ENCODE measurements at regions of chr7 and their contacts with region 1.

Region 1: DNA sequence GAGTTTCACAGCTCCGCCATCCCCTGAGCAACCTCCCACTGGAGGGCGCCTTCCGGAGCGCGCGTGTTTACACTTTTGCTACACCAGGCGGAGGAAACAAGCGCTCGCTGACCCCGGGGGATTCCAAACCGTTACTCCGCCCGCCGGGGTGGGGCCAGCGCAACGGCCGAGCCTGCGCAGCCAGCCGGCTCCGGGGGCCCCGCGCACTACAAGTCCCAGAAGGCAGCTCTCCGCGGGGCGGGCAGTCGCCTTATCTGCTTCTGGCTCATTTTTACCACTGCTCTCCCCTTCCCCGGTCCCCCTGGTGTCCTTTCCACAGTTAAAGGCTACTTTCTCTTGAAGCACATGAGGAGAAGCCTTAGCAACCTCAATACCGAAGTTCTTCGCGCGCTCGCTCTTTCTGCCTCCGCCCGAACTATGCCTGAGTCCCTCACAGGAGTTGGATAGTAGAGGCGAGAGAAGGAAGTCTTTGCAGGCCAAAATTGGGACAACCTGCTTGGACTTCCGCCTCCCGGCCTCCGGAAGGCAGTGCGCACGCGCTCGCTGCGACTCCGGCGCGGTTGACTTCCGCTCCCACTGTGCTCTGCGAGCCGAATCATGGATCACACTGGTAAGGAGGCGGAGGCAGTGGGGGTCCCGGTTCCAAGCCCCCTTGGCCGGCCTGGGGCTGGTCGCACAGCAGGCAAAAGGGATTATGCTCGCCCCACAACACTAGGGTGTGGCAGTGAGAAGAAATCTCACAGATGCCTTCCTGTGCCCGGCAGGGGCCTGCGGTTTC is at the start of gene CBLL1:
- DNase-seq: peak; percentile 96 to 98 (median 97)
- H3K4me3 ChIP-seq: peak within 1 kb of the TSS; percentile 97 to 98
- H3K4me3 Mint-ChIP-seq: peak within 1 kb of the TSS; percentile 90 to 100 (median 97)
- H3K27ac ChIP-seq: peak within 1 kb of the TSS; percentile 99
- H3K27ac Mint-ChIP-seq: peak within 1 kb of the TSS; percentile 99 to 100 (median 100)
- H3K4me1 ChIP-seq: peaks cover 55% of the 10 kb centered on the region
- H3K4me1 Mint-ChIP-seq: peaks cover 27 to 57% (median 41%) of the 10 kb centered on the region in 4 donors
- H3K27me3 ChIP-seq: no peaks in the 10 kb centered on the region
- H3K27me3 Mint-ChIP-seq: no peaks in the 10 kb centered on the region
- total RNA-seq, gene CBLL1: 79.1 to 82.8 TPM

Region 2: GRCh38 chr7:106285051-106285854 is 1458.5 kb before region 1 on chr7:
- CTCF ChIA-PET with region 1: no interaction called
- POLR2A ChIA-PET with region 1: no interaction called
- intact Hi-C with region 1: loop called (anchors 5 kb)
- DNase-seq: peak; percentile 93 to 99 (median 97)
- H3K4me3 ChIP-seq: peak overlapping the region; percentile 86 to 97
- H3K4me3 Mint-ChIP-seq: peak overlapping the region; percentile 95 to 98 (median 96)
- H3K27ac ChIP-seq: peak overlapping the region; percentile 95
- H3K27ac Mint-ChIP-seq: peak overlapping the region; percentile 93 to 99 (median 98)
- H3K4me1 ChIP-seq: peaks cover 29% of the 10 kb centered on the region
- H3K4me1 Mint-ChIP-seq: peaks cover 14 to 28% (median 21%) of the 10 kb centered on the region in 4 donors
- H3K27me3 ChIP-seq: no peaks in the 10 kb centered on the region
- H3K27me3 Mint-ChIP-seq: no peaks in the 10 kb centered on the region

Region 3: DNA sequence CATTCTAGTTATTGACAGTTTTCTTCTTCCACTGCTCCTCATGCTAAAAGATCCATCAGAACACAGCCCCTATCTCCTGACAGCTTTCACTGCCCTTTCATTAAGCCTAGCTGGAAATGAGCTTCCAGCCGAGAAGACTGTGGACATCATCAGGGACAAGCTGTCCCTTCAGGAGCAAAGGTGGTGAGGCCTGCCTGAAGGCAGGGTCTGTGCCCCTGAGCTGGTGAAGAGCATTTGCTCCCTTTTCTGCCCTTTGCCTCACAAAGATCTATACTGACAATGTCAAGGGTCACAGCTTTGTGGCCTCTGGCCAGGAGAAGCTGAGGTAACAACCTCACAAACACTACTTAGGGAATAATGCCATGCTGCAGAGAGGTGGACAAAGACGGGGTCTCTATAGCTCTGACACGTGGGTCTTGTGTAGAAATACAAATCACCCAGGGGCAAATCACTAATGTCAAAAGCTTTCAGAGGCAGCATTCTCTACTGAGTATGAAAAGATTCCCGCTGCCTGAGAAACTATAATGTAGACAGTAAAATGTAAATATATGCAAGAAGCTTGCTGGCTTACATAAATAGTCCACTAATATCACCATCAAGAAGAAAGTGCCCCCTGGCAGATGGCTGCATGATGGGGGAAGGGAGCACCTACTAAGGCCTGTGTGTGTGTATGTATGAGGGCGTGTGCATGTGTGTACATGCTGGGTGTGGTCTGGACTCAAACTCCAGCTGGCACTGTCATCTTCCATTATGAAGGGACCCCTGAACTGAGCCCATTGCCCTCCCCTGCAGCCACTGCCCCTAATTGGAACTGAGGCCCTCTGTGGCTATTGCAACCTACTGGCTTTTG is 519.2 kb before region 1 on chr7:
- CTCF ChIA-PET with region 1: no interaction called
- POLR2A ChIA-PET with region 1: no interaction called
- intact Hi-C with region 1: no loop called
- DNase-seq: no peak
- H3K4me3 ChIP-seq: no peak overlapping the region
- H3K4me3 Mint-ChIP-seq: no peak overlapping the region
- H3K27ac ChIP-seq: no peak overlapping the region
- H3K27ac Mint-ChIP-seq: peak overlapping the region in 2 of 7 donors; percentile 24 to 36
- H3K4me1 ChIP-seq: no peaks in the 10 kb centered on the region
- H3K4me1 Mint-ChIP-seq: peaks cover 0 to 2% (median 0%) of the 10 kb centered on the region in 4 donors
- H3K27me3 ChIP-seq: no peaks in the 10 kb centered on the region
- H3K27me3 Mint-ChIP-seq: no peaks in the 10 kb centered on the region

Region 4: DNA sequence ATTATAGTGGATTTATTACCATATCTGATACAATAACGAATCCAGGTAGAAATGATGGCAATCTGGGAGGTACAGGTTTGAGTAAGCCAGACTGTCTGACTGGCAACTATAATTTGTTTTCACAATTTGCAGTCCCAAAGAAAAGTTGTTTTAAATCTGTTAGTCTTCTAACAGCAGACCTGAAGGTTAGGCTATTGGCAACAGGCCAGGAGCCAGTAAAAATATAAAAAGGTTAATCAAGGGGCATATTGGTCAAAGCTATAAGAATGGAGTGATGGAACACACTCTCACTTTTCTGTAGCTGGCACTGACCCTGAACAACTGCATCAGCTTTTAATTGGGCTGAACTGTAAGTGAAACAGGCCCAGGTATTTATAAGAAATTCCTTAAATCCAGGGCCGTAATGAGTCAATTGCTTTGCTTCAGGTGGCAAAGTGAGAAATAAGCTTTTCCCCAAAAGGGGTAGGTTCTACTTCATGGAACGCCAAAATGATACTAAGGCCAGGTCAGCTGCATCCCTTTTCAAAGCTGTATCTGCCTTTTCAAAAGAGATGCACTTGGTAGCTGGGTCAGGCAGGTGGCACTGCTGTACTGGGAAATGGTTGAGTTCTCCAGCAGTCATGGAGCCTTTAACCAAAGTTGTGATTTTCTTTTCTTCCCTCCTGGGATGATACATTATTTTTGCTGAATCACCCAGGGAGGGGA is 280.9 kb before region 1 on chr7:
- CTCF ChIA-PET with region 1: interaction called, 20 read pairs
- POLR2A ChIA-PET with region 1: no interaction called
- intact Hi-C with region 1: loop called (anchors 5 kb)
- DNase-seq: peak; percentile 36 to 51 (median 46)
- H3K4me3 ChIP-seq: no peak overlapping the region
- H3K4me3 Mint-ChIP-seq: no peak overlapping the region
- H3K27ac ChIP-seq: no peak overlapping the region
- H3K27ac Mint-ChIP-seq: peak overlapping the region in 2 of 7 donors; percentile 6 to 17
- H3K4me1 ChIP-seq: no peaks in the 10 kb centered on the region
- H3K4me1 Mint-ChIP-seq: peaks cover 0 to 5% (median under 1%) of the 10 kb centered on the region in 4 donors
- H3K27me3 ChIP-seq: no peaks in the 10 kb centered on the region
- H3K27me3 Mint-ChIP-seq: no peaks in the 10 kb centered on the region

Region 5: GRCh38 chr7:107725151-107725740 is 18.5 kb before region 1 on chr7:
- CTCF ChIA-PET with region 1: interaction called, 34 read pairs
- POLR2A ChIA-PET with region 1: interaction called, 10 read pairs
- intact Hi-C with region 1: no loop called
- DNase-seq: peak; percentile 41 to 54 (median 48)
- H3K4me3 ChIP-seq: no peak overlapping the region
- H3K4me3 Mint-ChIP-seq: no peak overlapping the region
- H3K27ac ChIP-seq: no peak overlapping the region
- H3K27ac Mint-ChIP-seq: no peak overlapping the region
- H3K4me1 ChIP-seq: no peaks in the 10 kb centered on the region
- H3K4me1 Mint-ChIP-seq: peaks cover 0 to 3% (median 0%) of the 10 kb centered on the region in 4 donors
- H3K27me3 ChIP-seq: no peaks in the 10 kb centered on the region
- H3K27me3 Mint-ChIP-seq: peaks cover 0 to 3% of the 10 kb centered on the region in 2 donors

Region 6: GRCh38 chr7:107856806-107857540 is 113.2 kb after region 1 on chr7:
- CTCF ChIA-PET with region 1: interaction called, 25 read pairs
- POLR2A ChIA-PET with region 1: interaction called, 118 read pairs
- intact Hi-C with region 1: no loop called
- DNase-seq: peak; percentile 49 to 70 (median 58)
- H3K4me3 ChIP-seq: peak overlapping the region; percentile 17 to 26
- H3K4me3 Mint-ChIP-seq: peak overlapping the region; percentile 18 to 82 (median 70)
- H3K27ac ChIP-seq: peak overlapping the region; percentile 48
- H3K27ac Mint-ChIP-seq: peak overlapping the region; percentile 84 to 94 (median 91)
- H3K4me1 ChIP-seq: peaks cover 71% of the 10 kb centered on the region
- H3K4me1 Mint-ChIP-seq: peaks cover 47 to 82% (median 70%) of the 10 kb centered on the region in 4 donors
- H3K27me3 ChIP-seq: no peaks in the 10 kb centered on the region
- H3K27me3 Mint-ChIP-seq: no peaks in the 10 kb centered on the region

Region 7: DNA sequence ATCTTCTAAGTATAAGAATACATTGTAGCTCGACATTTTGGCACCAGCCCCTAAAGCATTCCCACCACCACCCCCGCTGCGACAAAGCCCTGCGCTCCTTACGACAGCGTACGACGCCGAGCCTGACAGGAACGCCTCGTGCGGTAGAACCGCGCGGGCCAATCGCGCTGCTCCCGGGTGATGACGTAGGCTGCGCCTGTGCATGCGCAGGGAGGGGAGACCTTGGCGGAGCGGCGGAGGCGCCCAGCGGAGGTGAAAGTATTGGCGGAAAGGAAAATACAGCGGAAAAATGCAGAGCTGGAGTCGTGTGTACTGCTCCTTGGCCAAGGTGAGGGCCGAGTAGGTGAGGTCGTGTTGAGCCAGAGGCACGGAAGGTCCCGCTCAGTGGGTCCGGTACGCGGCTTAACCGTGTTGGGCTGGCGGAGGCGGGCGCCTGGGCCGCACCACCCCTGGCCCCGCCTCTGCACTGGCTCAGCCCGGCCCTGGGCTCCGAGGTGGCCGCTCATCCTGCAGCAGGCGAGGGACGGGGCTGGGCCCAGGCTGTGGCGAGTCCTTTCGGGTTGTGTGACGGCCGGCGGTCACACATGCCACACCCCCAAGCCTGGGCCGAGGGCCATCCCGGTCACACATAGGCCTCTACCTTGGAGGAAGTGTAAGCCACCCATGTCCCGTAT is 147.3 kb after region 1 on chr7 and contains the start of gene DLD:
- CTCF ChIA-PET with region 1: interaction called, 36 read pairs
- POLR2A ChIA-PET with region 1: interaction called, 35 read pairs
- intact Hi-C with region 1: loop called (anchors 1 kb)
- DNase-seq: peak; percentile 92 to 95 (median 93)
- H3K4me3 ChIP-seq: peak within 1 kb of the TSS; percentile 84 to 98
- H3K4me3 Mint-ChIP-seq: peak within 1 kb of the TSS; percentile 93 to 100 (median 98)
- H3K27ac ChIP-seq: peak within 1 kb of the TSS; percentile 95
- H3K27ac Mint-ChIP-seq: peak within 1 kb of the TSS; percentile 97 to 100 (median 99)
- H3K4me1 ChIP-seq: peaks cover 52% of the 10 kb centered on the region
- H3K4me1 Mint-ChIP-seq: peaks cover 40 to 56% (median 48%) of the 10 kb centered on the region in 4 donors
- H3K27me3 ChIP-seq: no peaks in the 10 kb centered on the region
- H3K27me3 Mint-ChIP-seq: peaks cover 0 to 3% of the 10 kb centered on the region in 2 donors
- total RNA-seq, gene DLD: 42.1 to 51.1 TPM